Lower leg skin (tissue), 4 donors: ENCODE measurements at regions of chr13 and their contacts with region 1.

Region 1: GRCh38 chr13:32310134-32310706 is 4.9 kb downstream of the ZAR1L start:
- DNase-seq: no peak
- H3K4me3 ChIP-seq: no peak overlapping the region
- CTCF ChIP-seq: no peak
- POLR2A ChIP-seq: no peak

Region 2: GRCh38 chr13:31909864-31910551 is 400.2 kb before region 1 on chr13:
- intact Hi-C with region 1: loop called (anchors 5 kb)
- DNase-seq: peak in 1 of 2 donors; percentile 42
- H3K4me3 ChIP-seq: no peak overlapping the region
- CTCF ChIP-seq: peak in 1 of 3 donors; percentile 59
- POLR2A ChIP-seq: no peak

Region 3: DNA sequence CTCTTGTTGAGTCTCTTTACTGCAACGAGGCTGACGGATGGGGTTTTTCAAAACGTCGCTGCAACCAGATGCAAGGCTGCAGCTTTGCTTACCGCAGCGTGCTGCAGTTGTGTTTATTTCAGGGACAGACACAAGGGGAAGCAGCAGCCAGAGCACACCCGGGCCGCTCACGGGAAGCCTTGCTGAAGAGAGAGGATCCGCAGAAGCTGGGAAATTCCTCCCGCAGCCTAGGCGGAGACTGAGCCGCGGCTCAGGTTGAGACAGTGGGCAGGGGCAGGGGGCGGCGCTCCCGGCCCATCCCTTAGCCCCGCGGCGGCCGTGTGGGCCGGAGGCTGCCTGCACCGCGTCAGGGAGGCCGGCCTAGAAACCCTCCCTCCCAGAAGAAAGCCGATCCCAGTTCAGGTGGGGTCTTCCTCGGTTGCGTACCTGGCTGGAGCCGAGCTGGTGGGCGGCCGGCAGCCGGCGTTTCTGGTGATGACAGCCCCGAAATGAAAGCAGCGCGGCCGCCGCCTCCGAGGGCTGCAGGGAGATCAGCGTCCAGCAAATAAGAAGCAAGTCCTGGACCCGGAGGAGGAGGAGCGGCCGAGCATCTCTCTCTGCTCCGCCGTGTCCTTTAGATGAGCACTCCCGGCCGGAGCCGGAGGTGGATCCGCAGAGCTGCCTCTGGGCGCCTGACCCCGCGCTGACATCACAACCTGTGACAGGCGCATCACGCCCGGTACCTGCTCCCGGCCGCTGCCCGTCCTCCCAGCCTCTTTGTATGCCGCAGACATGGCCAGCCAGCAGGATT is 279.0 kb before region 1 on chr13 and contains the start of gene FRY:
- intact Hi-C with region 1: loop called (anchors 10 kb)
- DNase-seq: peak; percentile 32 to 89
- H3K4me3 ChIP-seq: peak within 1 kb of the TSS; percentile 55
- CTCF ChIP-seq: no peak
- POLR2A ChIP-seq: no peak
- total RNA-seq, gene FRY: 24.9 to 39.6 (median 35.9) TPM